Activated CD4-positive, alpha-beta T cell treated with anti-CD3 and anti-CD28 coated beads, Interleukin-2, amount 10 ng/mL, durations not matched to agents 24 days and 14 days (primary cell): ENCODE measurements at regions of chr2 and their contacts with region 1.

Region 1: GRCh38 chr2:200578778-200579177 is 7.0 kb upstream of the AOX1 start:
- DNase-seq: no peak
- H3K4me3 Mint-ChIP-seq: no peak overlapping the region
- H3K27ac Mint-ChIP-seq: peak overlapping the region; percentile 3
- H3K4me1 Mint-ChIP-seq: peaks cover 16% of the 10 kb centered on the region
- H3K27me3 Mint-ChIP-seq: no peaks in the 10 kb centered on the region

Region 2: GRCh38 chr2:200735061-200735460 is 156.3 kb after region 1 on chr2:
- intact Hi-C with region 1: loop called (anchors 1 kb)
- DNase-seq: no peak
- H3K4me3 Mint-ChIP-seq: no peak overlapping the region
- H3K27ac Mint-ChIP-seq: no peak overlapping the region
- H3K4me1 Mint-ChIP-seq: peaks cover 14% of the 10 kb centered on the region
- H3K27me3 Mint-ChIP-seq: peaks cover 9% of the 10 kb centered on the region

Region 3: GRCh38 chr2:201171259-201171814 is 592.6 kb after region 1 on chr2:
- intact Hi-C with region 1: loop called (anchors 10 kb)
- DNase-seq: no peak
- H3K4me3 Mint-ChIP-seq: no peak overlapping the region
- H3K27ac Mint-ChIP-seq: no peak overlapping the region
- H3K4me1 Mint-ChIP-seq: peaks cover 7% of the 10 kb centered on the region
- H3K27me3 Mint-ChIP-seq: no peaks in the 10 kb centered on the region

Region 4: GRCh38 chr2:201344663-201345366 is 766.0 kb after region 1 on chr2:
- intact Hi-C with region 1: no loop called
- DNase-seq: no peak
- H3K4me3 Mint-ChIP-seq: no peak overlapping the region
- H3K27ac Mint-ChIP-seq: no peak overlapping the region
- H3K4me1 Mint-ChIP-seq: peaks cover 8% of the 10 kb centered on the region
- H3K27me3 Mint-ChIP-seq: no peaks in the 10 kb centered on the region